Adrenal gland (tissue), 19 donors: ENCODE measurements at regions of chr11 and their contacts with region 1.

Region 1: GRCh38 chr11:125941619-125942611 is 3.9 kb upstream of the VSIG10L2 start:
- DNase-seq: peak in 6 of 7 donors; percentile 34 to 70 (median 50)
- H3K4me3 ChIP-seq: no peak overlapping the region
- H3K27ac ChIP-seq: no peak overlapping the region
- H3K4me1 ChIP-seq: no peaks in the 10 kb centered on the region
- H3K27me3 ChIP-seq: no peaks in the 10 kb centered on the region
- CTCF ChIP-seq: peak; percentile 33 to 58 (median 42)
- POLR2A ChIP-seq: no peak

Region 2: DNA sequence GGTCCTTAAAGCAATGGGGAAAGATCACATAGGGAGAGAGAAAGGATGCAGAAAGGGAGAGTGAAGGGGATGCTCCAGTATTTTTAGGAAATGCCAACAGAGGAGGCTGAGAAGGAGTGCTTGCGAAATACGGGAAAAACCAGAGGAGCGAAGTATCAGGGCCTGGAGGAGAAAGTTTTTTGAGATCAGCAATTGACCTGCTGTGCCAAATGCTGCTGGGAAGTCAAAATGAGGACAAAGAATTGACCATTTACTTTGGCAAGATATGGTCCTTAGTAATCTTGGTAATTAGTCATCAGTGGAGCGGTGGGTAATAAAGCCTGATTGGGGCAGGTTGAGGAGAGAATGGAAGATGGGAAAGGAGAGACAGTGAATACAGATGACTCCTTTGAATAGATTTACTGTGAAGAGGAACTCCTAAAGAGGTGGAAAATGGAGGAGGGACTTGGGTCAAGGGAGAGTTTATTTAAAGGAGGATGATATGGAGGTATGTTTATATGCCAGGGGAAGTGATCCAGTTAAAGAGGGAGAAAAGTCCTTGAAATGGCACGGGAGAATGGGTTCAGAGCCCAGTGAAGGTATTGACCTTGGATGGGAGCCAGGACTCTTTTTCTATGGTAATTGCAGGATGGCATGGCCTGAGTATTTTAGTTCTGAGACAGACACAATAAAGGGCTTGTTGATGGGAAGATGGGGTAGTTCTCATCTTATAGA is 665.9 kb before region 1 on chr11:
- intact Hi-C with region 1: no loop called
- DNase-seq: peak in 1 of 7 donors; percentile 36
- H3K4me3 ChIP-seq: no peak overlapping the region
- H3K27ac ChIP-seq: no peak overlapping the region
- H3K4me1 ChIP-seq: peaks cover 0 to 8% of the 10 kb centered on the region in 2 donors
- H3K27me3 ChIP-seq: no peaks in the 10 kb centered on the region
- CTCF ChIP-seq: no peak
- POLR2A ChIP-seq: no peak

Region 3: DNA sequence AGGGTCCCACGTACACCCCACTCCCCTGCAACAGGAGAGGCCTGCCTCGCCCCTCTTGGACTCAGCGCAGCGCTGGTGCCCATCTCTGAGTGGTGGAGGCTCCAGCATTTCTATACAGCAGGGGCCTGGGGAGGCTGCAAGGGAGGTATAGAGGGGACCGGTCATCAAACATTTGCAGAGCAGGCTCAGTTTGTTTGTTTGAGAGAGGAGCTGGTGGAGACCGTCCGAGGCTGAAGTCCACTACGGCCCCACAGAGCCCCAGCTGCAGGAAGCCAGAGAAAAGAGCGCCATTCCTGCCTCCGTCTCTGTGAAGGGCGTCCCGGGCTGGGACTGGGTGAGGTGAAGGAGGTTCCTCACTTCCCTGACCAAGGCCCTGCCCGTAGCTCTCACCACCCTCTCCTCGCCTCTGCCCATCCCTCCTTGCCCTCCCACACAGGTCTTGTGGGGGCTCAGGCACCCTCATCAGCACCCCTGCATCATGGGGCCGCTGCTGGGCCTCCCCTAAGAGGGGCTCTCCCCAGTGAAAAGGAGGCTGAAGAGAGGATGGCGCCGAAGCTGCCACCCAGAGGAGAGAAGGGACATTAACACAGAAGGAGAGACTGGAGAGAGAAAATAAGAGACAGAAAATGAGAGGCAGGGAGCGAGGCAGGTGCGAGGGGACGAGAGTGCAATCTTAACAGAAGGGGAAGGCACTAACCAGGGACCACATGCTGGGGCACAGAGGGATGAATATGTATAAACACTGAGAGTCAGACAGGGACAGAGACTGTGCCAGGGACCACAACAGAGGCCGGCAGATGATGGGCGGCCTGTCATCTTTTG is 245.0 kb after region 1 on chr11:
- intact Hi-C with region 1: loop called (anchors 5 to 10 kb)
- DNase-seq: no peak
- H3K4me3 ChIP-seq: no peak overlapping the region
- H3K27ac ChIP-seq: no peak overlapping the region
- H3K4me1 ChIP-seq: no peaks in the 10 kb centered on the region
- H3K27me3 ChIP-seq: no peaks in the 10 kb centered on the region
- CTCF ChIP-seq: no peak
- POLR2A ChIP-seq: no peak

Region 4: GRCh38 chr11:126194121-126194543 is 252.2 kb after region 1 on chr11:
- intact Hi-C with region 1: loop called (anchors 5 to 10 kb)
- DNase-seq: peak in 6 of 7 donors; percentile 29 to 79 (median 48)
- H3K4me3 ChIP-seq: no peak overlapping the region
- H3K27ac ChIP-seq: no peak overlapping the region
- H3K4me1 ChIP-seq: no peaks in the 10 kb centered on the region
- H3K27me3 ChIP-seq: no peaks in the 10 kb centered on the region
- CTCF ChIP-seq: peak; percentile 59 to 90 (median 76)
- POLR2A ChIP-seq: no peak